ENCODE measurements at regions of chr17 and their contacts with region 1.

Region 1: DNA sequence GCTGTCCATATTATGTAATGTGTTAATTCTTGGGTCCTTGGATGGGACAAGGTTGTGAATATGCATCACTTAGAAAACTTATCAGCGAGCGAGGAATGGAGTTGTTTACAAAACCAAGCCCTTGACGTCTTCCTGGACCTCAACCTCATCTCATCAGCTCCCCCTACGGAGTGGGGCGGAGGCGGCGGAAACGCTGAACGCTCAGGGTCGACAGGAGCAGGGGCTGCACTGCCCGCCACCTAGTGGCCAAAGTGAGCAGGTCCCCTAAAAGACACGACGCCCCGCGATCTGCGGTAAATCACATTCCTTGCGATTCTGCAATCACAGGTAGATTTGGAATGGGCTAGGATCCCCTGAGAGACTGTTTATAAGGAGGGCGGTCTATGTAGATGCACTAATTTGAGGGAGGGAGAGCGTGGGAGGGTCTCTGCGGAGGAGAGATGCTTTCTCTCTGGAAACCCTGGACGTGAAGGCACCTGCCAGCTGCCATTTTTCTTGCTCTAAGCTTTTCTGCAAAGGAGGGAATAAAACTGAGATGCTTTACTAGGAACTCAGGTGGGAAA is 5.4 kb upstream of the ICAM2 start:
- DNase-seq: peak; percentile 95
- H3K4me3 Mint-ChIP-seq: peak overlapping the region; percentile 81
- H3K27ac Mint-ChIP-seq: peak overlapping the region; percentile 98
- H3K4me1 Mint-ChIP-seq: peaks cover 67% of the 10 kb centered on the region
- H3K27me3 Mint-ChIP-seq: no peaks in the 10 kb centered on the region

Region 2: GRCh38 chr17:63587770-63588169 is 438.0 kb before region 1 on chr17:
- CTCF ChIA-PET with region 1: no interaction called
- POLR2A ChIA-PET with region 1: no interaction called
- intact Hi-C with region 1: no loop called
- DNase-seq: no peak
- H3K4me3 Mint-ChIP-seq: no peak overlapping the region
- H3K27ac Mint-ChIP-seq: no peak overlapping the region
- H3K4me1 Mint-ChIP-seq: peaks cover 13% of the 10 kb centered on the region
- H3K27me3 Mint-ChIP-seq: no peaks in the 10 kb centered on the region

Region 3: DNA sequence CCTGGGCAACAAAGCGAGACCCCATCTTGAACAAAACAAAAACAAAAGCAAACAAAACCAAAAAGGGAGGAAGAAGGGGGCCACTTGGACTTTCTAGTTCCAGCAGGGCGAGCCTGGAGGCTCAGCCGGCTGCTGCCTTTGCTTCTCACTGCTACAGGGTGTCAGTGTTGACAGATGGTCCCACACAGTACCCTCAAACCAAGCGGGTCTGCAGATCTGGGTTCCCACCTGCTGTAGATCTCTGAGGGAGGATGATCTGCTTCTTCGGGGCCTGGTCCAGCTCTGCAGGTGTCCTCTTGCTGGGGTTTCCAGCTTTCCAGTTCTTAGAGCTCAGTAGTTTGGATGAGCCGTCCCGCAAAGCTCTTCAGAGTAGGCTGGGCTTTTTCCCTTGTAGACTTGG is 121.5 kb before region 1 on chr17:
- CTCF ChIA-PET with region 1: interaction called, 6 read pairs
- POLR2A ChIA-PET with region 1: no interaction called
- intact Hi-C with region 1: loop called (anchors 5 kb)
- DNase-seq: no peak
- H3K4me3 Mint-ChIP-seq: no peak overlapping the region
- H3K27ac Mint-ChIP-seq: no peak overlapping the region
- H3K4me1 Mint-ChIP-seq: peaks cover 11% of the 10 kb centered on the region
- H3K27me3 Mint-ChIP-seq: no peaks in the 10 kb centered on the region

Region 4: GRCh38 chr17:63931099-63931561 is 94.7 kb before region 1 on chr17:
- CTCF ChIA-PET with region 1: interaction called, 18 read pairs
- POLR2A ChIA-PET with region 1: interaction called, 3 read pairs
- intact Hi-C with region 1: loop called (anchors 5 kb)
- DNase-seq: peak; percentile 77
- H3K4me3 Mint-ChIP-seq: peak overlapping the region; percentile 95
- H3K27ac Mint-ChIP-seq: peak overlapping the region; percentile 91
- H3K4me1 Mint-ChIP-seq: peaks cover 17% of the 10 kb centered on the region
- H3K27me3 Mint-ChIP-seq: no peaks in the 10 kb centered on the region

Region 5: DNA sequence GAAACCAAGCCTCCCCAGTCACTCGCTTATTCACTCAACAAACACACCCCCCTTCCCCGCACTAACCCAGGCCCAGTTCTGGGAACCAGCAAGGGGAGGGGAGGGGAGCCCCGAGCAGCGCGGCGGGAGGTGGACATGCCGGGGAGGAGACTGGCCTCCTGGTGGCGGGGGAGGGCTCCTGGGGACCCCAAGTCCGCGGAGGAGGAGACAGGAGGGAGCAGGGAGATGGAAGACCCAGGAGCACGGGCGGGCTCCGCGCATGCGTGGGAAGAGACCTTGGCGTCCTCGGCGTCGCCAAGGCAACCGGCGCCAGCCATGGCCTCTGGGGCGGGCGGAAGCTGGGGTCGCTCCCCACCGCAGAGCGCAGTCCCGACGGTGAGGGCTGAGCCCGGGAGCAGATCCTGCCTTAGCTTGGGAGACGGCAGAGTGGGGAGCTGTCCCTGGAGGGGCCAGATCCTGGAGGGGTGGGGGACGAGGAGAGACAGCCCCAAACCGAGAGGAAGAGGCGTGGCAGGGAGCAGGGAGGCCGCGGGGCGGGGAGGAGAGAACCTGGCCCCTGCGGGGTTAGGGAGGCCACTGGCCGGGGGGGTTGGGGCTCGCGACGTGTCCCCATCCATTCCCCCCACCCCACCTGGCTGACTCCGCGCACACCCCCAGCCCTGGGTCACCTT is 27.6 kb before region 1 on chr17 and contains the start of gene PRR29:
- CTCF ChIA-PET with region 1: interaction called, 9 read pairs
- POLR2A ChIA-PET with region 1: interaction called, 4 read pairs
- intact Hi-C with region 1: loop called (anchors 1 kb)
- DNase-seq: peak; percentile 81
- H3K4me3 Mint-ChIP-seq: peak within 1 kb of the TSS; percentile 88
- H3K27ac Mint-ChIP-seq: peak within 1 kb of the TSS; percentile 28
- H3K4me1 Mint-ChIP-seq: peaks cover 29% of the 10 kb centered on the region
- H3K27me3 Mint-ChIP-seq: peaks cover 3% of the 10 kb centered on the region
- total RNA-seq, gene PRR29: 2.0 to 3.4 TPM

Region 6: GRCh38 chr17:64056269-64057005 is 30.6 kb after region 1 on chr17:
- CTCF ChIA-PET with region 1: interaction called, 30 read pairs
- POLR2A ChIA-PET with region 1: interaction called, 15 read pairs
- intact Hi-C with region 1: loop called (anchors 1 kb)
- DNase-seq: no peak
- H3K4me3 Mint-ChIP-seq: no peak overlapping the region
- H3K27ac Mint-ChIP-seq: peak overlapping the region; percentile 64
- H3K4me1 Mint-ChIP-seq: peaks cover 55% of the 10 kb centered on the region
- H3K27me3 Mint-ChIP-seq: no peaks in the 10 kb centered on the region

Region 7: GRCh38 chr17:64117981-64118979 is 92.5 kb after region 1 on chr17:
- CTCF ChIA-PET with region 1: interaction called, 12 read pairs
- POLR2A ChIA-PET with region 1: interaction called, 7 read pairs
- intact Hi-C with region 1: no loop called
- DNase-seq: no peak
- H3K4me3 Mint-ChIP-seq: no peak overlapping the region
- H3K27ac Mint-ChIP-seq: peak overlapping the region; percentile 71
- H3K4me1 Mint-ChIP-seq: peaks cover 78% of the 10 kb centered on the region
- H3K27me3 Mint-ChIP-seq: no peaks in the 10 kb centered on the region

Region 8: GRCh38 chr17:64281962-64282727 is 256.3 kb after region 1 on chr17:
- CTCF ChIA-PET with region 1: interaction called, 15 read pairs
- POLR2A ChIA-PET with region 1: no interaction called
- intact Hi-C with region 1: loop called (anchors 5 kb)
- DNase-seq: peak; percentile 63
- H3K4me3 Mint-ChIP-seq: no peak overlapping the region
- H3K27ac Mint-ChIP-seq: no peak overlapping the region
- H3K4me1 Mint-ChIP-seq: peaks cover 6% of the 10 kb centered on the region
- H3K27me3 Mint-ChIP-seq: no peaks in the 10 kb centered on the region

Measured in activated CD4-positive, alpha-beta memory T cell treated with anti-CD3 and anti-CD28 coated beads for 36 hours (primary cell).